ENCODE measurements at regions of chr2 and their contacts with region 1.

Region 1: DNA sequence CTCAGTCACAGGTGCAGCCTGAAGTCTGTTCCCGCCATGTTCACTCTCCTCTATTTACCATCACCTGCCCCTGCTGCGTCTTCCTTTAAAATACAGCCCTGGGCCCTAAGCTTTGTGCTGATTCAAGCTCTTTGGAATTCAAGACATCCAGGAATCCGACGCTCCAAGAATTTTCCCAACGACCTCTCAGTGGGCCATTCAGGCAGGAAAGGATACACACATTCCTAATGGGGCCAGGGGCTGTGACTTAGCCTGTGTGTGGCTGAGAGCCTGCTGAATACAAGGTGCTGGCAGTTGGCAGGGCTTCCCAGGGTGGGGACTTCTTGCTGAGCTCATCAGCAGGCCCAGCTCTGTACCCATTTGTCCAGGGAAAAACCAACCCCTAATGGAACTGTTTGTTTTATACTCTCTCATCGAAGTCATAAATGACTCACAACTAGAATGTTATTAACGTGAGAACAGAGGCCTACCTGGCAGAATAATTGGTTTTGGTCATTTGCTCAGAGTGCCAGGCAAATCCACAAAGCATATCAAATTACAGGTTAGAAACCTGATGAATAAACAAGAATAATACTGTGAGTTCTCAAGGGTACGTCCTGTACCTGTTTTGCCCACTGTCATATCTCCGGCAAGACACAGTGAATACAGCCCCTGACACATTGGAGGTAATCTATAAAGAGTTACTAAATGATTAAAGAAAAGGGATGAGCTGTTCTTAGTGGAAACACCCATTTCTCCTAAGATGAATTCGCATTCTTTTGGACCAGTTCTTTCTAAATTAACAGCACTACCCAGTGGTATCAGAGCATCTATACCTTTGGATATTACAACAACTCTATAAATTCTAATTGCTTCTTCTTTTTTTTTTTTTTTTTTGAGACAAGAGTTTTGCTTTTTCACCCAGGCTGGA is 12.6 kb upstream of the KCMF1 start:
- DNase-seq: peak; percentile 99
- ATAC-seq: peak; percentile 92
- H3K4me3 ChIP-seq: peak overlapping the region; percentile 41; the same call in 1 of the 2 replicates
- H3K27ac ChIP-seq: peak overlapping the region; percentile 99
- H3K4me1 ChIP-seq: peaks cover 42% of the 10 kb centered on the region
- H3K27me3 ChIP-seq: no peaks in the 10 kb centered on the region
- CTCF ChIP-seq: no peak

Region 2: GRCh38 chr2:84741296-84741765 is 217.1 kb before region 1 on chr2:
- CTCF ChIA-PET with region 1: no interaction called
- POLR2A ChIA-PET with region 1: no interaction called
- intact Hi-C with region 1: no loop called
- DNase-seq: peak; percentile 61
- ATAC-seq: peak; percentile 80
- H3K4me3 ChIP-seq: no peak overlapping the region
- H3K27ac ChIP-seq: no peak overlapping the region
- H3K4me1 ChIP-seq: no peaks in the 10 kb centered on the region
- H3K27me3 ChIP-seq: peaks cover 31% of the 10 kb centered on the region; the same call in 1 of the 2 replicates
- CTCF ChIP-seq: peak; percentile 49

Region 3: DNA sequence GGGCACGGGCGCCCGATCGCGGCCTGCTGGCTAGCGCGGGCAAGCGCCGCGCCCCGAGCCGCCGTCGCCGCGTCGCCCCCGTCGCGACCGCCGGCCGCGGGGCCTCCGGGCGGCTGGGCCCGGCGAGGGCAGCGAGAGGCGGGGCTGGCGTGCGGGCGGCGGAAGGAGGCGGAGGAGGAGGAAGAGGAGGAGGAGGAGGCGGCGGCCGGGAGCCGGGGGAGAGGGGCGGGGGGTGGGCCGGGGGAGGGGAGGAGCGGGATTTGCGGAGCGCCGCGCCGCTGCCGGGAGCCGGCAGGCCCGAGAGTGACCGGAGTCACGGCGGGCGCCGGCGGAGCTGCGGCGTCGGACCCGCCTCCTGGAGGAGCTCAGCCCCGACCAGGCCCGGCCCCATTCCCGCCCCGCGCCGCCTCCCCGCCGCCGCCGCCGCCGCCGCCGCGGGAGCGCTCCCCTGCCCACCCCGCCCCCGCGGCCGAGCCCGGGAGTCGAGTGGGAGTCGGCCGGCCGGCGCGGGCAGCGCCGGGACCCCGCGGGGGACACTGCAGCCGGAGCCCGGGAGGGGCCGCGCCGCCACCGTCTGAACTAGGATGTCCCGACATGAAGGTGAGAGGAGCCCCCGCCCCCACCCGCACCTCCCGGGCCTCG is 12.6 kb after region 1 on chr2 and contains the start of gene KCMF1:
- CTCF ChIA-PET with region 1: interaction called, 4 read pairs
- POLR2A ChIA-PET with region 1: interaction called, 31 read pairs
- intact Hi-C with region 1: no loop called
- DNase-seq: peak; percentile 75
- ATAC-seq: peak; percentile 72
- H3K4me3 ChIP-seq: peak within 1 kb of the TSS; percentile 82
- H3K27ac ChIP-seq: peak within 1 kb of the TSS; percentile 82
- H3K4me1 ChIP-seq: peaks cover 27% of the 10 kb centered on the region; the same call in 1 of the 2 replicates
- H3K27me3 ChIP-seq: no peaks in the 10 kb centered on the region
- CTCF ChIP-seq: no peak
- total RNA-seq, gene KCMF1: 62.1 and 73.6 TPM in 2 replicates

Region 4: GRCh38 chr2:85215448-85216401 is 257.3 kb after region 1 on chr2:
- CTCF ChIA-PET with region 1: no interaction called
- POLR2A ChIA-PET with region 1: no interaction called
- intact Hi-C with region 1: no loop called
- DNase-seq: no peak
- ATAC-seq: no peak
- H3K4me3 ChIP-seq: no peak overlapping the region
- H3K27ac ChIP-seq: no peak overlapping the region
- H3K4me1 ChIP-seq: no peaks in the 10 kb centered on the region
- H3K27me3 ChIP-seq: no peaks in the 10 kb centered on the region
- CTCF ChIP-seq: no peak